Activated CD4-positive, alpha-beta T cell treated with anti-CD3 and anti-CD28 coated beads for 36 hours (primary cell): ENCODE measurements at regions of chr4 and their contacts with region 1.

Region 1: GRCh38 chr4:121736735-121737351 is 28.1 kb downstream of the SMIM43 start:
- DNase-seq: peak; percentile 35
- ATAC-seq: no peak
- H3K4me3 Mint-ChIP-seq: no peak overlapping the region
- H3K27ac Mint-ChIP-seq: no peak overlapping the region
- H3K4me1 Mint-ChIP-seq: no peaks in the 10 kb centered on the region
- H3K27me3 Mint-ChIP-seq: peaks cover 6% of the 10 kb centered on the region

Region 2: DNA sequence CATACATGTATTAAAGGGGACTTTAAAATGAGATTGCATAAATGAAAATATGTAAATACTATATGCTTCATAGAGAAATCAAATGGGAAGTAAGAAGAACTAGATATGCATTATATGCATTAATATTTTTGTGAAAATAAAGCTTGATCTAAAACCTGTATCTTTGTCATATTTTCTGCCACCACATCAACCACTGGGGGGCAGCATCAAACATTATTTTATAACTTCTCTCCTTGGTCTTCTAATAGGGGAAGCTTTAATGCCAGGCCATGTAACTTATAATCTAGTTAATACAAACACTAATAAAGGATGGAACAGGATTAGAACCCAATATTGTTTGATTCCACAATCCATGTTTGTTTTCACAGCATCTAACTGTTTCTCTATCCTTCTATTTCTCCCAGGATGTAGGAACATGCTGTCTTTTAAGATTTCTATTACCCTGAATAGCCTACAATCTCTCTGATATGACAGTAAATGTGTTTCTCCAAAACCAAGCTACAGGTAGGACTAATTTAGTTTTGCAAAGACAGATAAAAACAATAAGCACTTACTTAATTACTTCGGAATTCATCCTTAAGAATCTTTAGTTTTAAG is 366.0 kb before region 1 on chr4:
- CTCF ChIA-PET with region 1: interaction called, 12 read pairs
- POLR2A ChIA-PET with region 1: no interaction called
- intact Hi-C with region 1: no loop called
- DNase-seq: peak; percentile 64
- ATAC-seq: no peak
- H3K4me3 Mint-ChIP-seq: no peak overlapping the region
- H3K27ac Mint-ChIP-seq: no peak overlapping the region
- H3K4me1 Mint-ChIP-seq: no peaks in the 10 kb centered on the region
- H3K27me3 Mint-ChIP-seq: peaks cover 20% of the 10 kb centered on the region

Region 3: DNA sequence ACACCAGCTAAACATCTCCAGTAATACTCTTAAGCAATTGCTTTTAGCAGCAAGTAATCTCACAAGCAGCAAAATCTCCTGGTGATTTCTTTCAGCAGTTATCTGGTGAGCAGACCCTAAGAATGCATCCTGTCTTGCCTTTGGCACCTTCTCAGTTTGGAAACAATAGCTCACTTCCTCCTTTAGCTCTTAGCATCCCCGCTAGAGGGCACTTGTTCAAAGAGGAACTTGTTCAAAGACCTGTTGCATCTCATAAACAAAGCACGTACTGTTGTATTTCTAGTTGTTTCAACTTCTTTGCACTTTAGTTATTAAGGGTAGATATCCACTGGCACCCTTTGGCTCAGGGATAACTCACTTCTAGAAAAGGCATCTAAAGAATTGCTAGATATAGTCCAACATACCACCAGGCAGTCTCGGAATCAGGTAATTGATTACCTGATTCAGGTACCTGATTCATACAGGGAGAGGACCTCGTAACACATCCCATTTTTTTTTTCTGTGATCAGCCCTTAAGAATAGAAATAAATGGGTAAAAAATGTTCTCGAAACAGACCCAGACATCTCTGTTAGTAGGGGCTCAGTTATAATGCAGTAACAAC is 274.1 kb before region 1 on chr4:
- CTCF ChIA-PET with region 1: interaction called, 3 read pairs
- POLR2A ChIA-PET with region 1: no interaction called
- intact Hi-C with region 1: loop called in 1 of 2 experiments (anchors 1 kb)
- DNase-seq: peak; percentile 38
- ATAC-seq: peak; percentile 47
- H3K4me3 Mint-ChIP-seq: no peak overlapping the region
- H3K27ac Mint-ChIP-seq: no peak overlapping the region
- H3K4me1 Mint-ChIP-seq: no peaks in the 10 kb centered on the region
- H3K27me3 Mint-ChIP-seq: peaks cover 3% of the 10 kb centered on the region

Region 4: GRCh38 chr4:121784975-121785374 is 48.1 kb after region 1 on chr4:
- CTCF ChIA-PET with region 1: no interaction called
- POLR2A ChIA-PET with region 1: no interaction called
- intact Hi-C with region 1: no loop called
- DNase-seq: no peak
- ATAC-seq: no peak
- H3K4me3 Mint-ChIP-seq: no peak overlapping the region
- H3K27ac Mint-ChIP-seq: no peak overlapping the region
- H3K4me1 Mint-ChIP-seq: peaks cover 7% of the 10 kb centered on the region
- H3K27me3 Mint-ChIP-seq: peaks cover 39% of the 10 kb centered on the region

Region 5: GRCh38 chr4:121838136-121838535 is 101.3 kb after region 1 on chr4:
- CTCF ChIA-PET with region 1: no interaction called
- POLR2A ChIA-PET with region 1: no interaction called
- intact Hi-C with region 1: no loop called
- DNase-seq: no peak
- ATAC-seq: no peak
- H3K4me3 Mint-ChIP-seq: no peak overlapping the region
- H3K27ac Mint-ChIP-seq: no peak overlapping the region
- H3K4me1 Mint-ChIP-seq: no peaks in the 10 kb centered on the region
- H3K27me3 Mint-ChIP-seq: no peaks in the 10 kb centered on the region